ENCODE measurements at regions of chr4 and their contacts with region 1.

Region 1: DNA sequence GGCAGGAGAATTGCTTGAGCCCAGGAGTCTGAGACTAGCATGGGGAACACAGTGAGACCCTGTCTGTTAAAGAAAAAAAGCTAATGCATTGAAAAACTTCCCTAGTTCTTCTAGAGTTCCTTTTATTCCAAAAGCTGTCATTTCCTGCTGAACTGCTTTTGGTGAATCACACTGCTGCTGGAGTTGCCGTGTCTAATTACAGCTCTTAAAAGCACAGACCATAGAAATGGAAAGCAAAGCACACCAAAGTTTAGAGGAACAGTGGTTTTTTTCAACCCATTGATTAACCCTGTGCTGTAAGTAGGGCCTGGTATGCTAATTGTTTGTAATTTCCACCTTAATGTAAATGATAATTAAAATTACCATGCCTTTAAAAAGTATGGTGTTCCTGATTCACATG is 52.4 kb downstream of the SEPTIN11 start:
- DNase-seq: no peak
- ATAC-seq: no peak
- H3K4me3 ChIP-seq: no peak overlapping the region
- H3K4me3 Mint-ChIP-seq: no peak overlapping the region
- H3K27ac ChIP-seq: no peak overlapping the region
- H3K27ac Mint-ChIP-seq: no peak overlapping the region
- H3K4me1 ChIP-seq: peaks cover 2% of the 10 kb centered on the region
- H3K4me1 Mint-ChIP-seq: peaks cover 28% of the 10 kb centered on the region
- H3K27me3 ChIP-seq: no peaks in the 10 kb centered on the region
- H3K27me3 Mint-ChIP-seq: no peaks in the 10 kb centered on the region
- CTCF ChIP-seq: no peak

Region 2: DNA sequence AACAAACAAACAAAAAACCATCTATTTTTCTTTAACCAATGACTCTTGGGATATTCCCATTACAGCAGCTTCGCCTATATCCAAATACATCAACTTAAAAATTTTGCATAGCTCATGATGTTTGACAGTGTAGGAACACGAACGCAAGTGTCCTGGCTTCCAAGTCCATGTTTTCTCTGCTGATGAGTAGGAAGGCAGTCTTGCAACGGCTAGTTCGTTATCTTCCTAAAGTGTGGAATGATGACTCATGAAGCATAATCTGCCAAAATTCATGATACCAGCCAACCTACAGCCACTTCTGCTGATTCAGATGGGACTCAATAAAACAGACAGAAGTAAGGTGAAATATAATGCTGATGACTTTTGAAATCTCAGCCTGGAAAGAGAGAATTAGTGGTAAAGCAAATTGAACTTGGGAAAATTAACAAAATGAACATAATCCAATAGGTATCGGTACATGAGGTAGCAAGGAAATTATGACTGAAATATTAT is 58.7 kb before region 1 on chr4:
- CTCF ChIA-PET with region 1: no interaction called
- POLR2A ChIA-PET with region 1: no interaction called
- intact Hi-C with region 1: no loop called
- DNase-seq: no peak
- ATAC-seq: no peak
- H3K4me3 ChIP-seq: no peak overlapping the region
- H3K4me3 Mint-ChIP-seq: no peak overlapping the region
- H3K27ac ChIP-seq: no peak overlapping the region
- H3K27ac Mint-ChIP-seq: no peak overlapping the region
- H3K4me1 ChIP-seq: no peaks in the 10 kb centered on the region
- H3K4me1 Mint-ChIP-seq: peaks cover 2% of the 10 kb centered on the region
- H3K27me3 ChIP-seq: no peaks in the 10 kb centered on the region
- H3K27me3 Mint-ChIP-seq: no peaks in the 10 kb centered on the region
- CTCF ChIP-seq: no peak

Region 3: DNA sequence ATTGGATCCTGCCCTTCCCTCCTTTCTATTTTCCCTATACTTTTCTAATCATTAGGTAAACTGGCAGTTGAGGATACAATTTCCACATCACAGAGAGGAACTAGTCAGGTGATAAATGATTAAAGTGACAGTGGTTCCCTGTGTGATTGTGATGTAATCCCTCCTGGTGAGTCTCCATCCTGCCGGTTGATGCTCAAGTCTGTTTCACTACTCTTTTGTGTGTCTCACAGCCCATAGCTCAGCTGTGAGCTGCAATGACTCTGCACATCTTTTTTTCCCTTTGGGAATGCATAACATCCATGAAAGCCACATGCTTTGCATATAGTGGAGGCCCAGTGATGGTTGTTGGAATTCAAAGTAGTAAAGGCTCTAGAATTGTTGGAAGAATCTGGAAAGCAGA is 13.5 kb after region 1 on chr4:
- CTCF ChIA-PET with region 1: interaction called, 3 read pairs
- POLR2A ChIA-PET with region 1: no interaction called
- intact Hi-C with region 1: loop called in 1 of 2 experiments (anchors 1 kb)
- DNase-seq: no peak
- ATAC-seq: no peak
- H3K4me3 ChIP-seq: no peak overlapping the region
- H3K4me3 Mint-ChIP-seq: no peak overlapping the region
- H3K27ac ChIP-seq: no peak overlapping the region
- H3K27ac Mint-ChIP-seq: no peak overlapping the region
- H3K4me1 ChIP-seq: peaks cover 24% of the 10 kb centered on the region
- H3K4me1 Mint-ChIP-seq: peaks cover 41% of the 10 kb centered on the region
- H3K27me3 ChIP-seq: no peaks in the 10 kb centered on the region
- H3K27me3 Mint-ChIP-seq: no peaks in the 10 kb centered on the region
- CTCF ChIP-seq: no peak

Region 4: GRCh38 chr4:77095101-77095821 is 93.4 kb after region 1 on chr4:
- CTCF ChIA-PET with region 1: no interaction called
- POLR2A ChIA-PET with region 1: no interaction called
- intact Hi-C with region 1: no loop called
- DNase-seq: peak; percentile 48 to 79 (median 75)
- ATAC-seq: peak; percentile 99
- H3K4me3 ChIP-seq: no peak overlapping the region
- H3K4me3 Mint-ChIP-seq: no peak overlapping the region
- H3K27ac ChIP-seq: no peak overlapping the region
- H3K27ac Mint-ChIP-seq: no peak overlapping the region
- H3K4me1 ChIP-seq: peaks cover 1% of the 10 kb centered on the region
- H3K4me1 Mint-ChIP-seq: peaks cover 14% of the 10 kb centered on the region
- H3K27me3 ChIP-seq: peaks cover 0 to 2% of the 10 kb centered on the region in 2 experiments
- H3K27me3 Mint-ChIP-seq: no peaks in the 10 kb centered on the region
- CTCF ChIP-seq: peak; percentile 83

Region 5: GRCh38 chr4:77852892-77853495 is 851.1 kb after region 1 on chr4:
- CTCF ChIA-PET with region 1: no interaction called
- POLR2A ChIA-PET with region 1: no interaction called
- intact Hi-C with region 1: no loop called
- DNase-seq: peak; percentile 39 to 94 (median 70)
- ATAC-seq: peak; percentile 84
- H3K4me3 ChIP-seq: peak overlapping the region; percentile 19 to 38
- H3K4me3 Mint-ChIP-seq: peak overlapping the region; percentile 71
- H3K27ac ChIP-seq: peak overlapping the region; percentile 88 to 97
- H3K27ac Mint-ChIP-seq: peak overlapping the region; percentile 99
- H3K4me1 ChIP-seq: peaks cover 59% of the 10 kb centered on the region
- H3K4me1 Mint-ChIP-seq: peaks cover 58% of the 10 kb centered on the region
- H3K27me3 ChIP-seq: no peaks in the 10 kb centered on the region
- H3K27me3 Mint-ChIP-seq: no peaks in the 10 kb centered on the region
- CTCF ChIP-seq: no peak

Measured in CD8-positive, alpha-beta T cell (primary cell).